ENCODE measurements at regions of chr9 and their contacts with region 1.

Region 1: DNA sequence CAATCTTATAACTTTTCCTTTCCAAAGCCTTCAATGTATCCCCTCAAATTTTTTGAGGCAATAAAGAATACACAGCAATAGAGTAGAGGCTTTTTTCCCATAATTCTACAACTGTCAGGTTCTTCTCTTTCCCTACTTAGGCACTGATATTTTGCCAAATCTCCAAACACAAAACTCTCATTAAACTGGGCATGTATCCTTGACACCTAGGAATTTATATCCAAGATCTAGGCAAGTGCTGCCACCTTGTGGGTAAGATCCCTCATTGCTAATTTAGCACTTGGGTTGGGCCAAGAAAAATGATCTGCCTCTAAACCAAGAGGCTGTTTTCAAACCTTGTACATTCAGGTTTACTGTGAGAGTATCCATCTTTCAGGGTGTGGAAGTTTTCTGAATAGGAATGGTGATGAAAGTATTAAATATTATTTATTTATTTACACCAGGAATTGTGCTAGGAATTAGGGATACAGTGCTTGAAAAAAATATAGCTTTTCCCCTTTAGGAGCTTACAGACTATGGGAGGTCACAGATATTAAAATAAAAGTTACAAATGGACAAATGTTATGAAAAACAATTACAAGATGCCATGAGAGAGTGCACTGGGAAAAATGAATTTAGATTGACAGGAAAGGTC is 17.6 kb downstream of the TSTD2 start:
- DNase-seq: peak; percentile 71 to 78 (median 76)
- ATAC-seq: peak; percentile 82
- H3K4me3 ChIP-seq: no peak overlapping the region
- H3K27ac ChIP-seq: no peak overlapping the region
- H3K4me1 ChIP-seq: peaks cover 5% of the 10 kb centered on the region
- H3K27me3 ChIP-seq: no peaks in the 10 kb centered on the region
- CTCF ChIP-seq: peak; percentile 50 to 89 (median 85)
- POLR2A ChIP-seq: no peak

Region 2: GRCh38 chr9:97468658-97469448 is 146.7 kb before region 1 on chr9:
- intact Hi-C with region 1: loop called (anchors 5 kb)
- DNase-seq: peak; percentile 83 to 88 (median 87)
- ATAC-seq: peak; percentile 99
- H3K4me3 ChIP-seq: no peak overlapping the region
- H3K27ac ChIP-seq: no peak overlapping the region
- H3K4me1 ChIP-seq: peaks cover 7% of the 10 kb centered on the region
- H3K27me3 ChIP-seq: no peaks in the 10 kb centered on the region
- CTCF ChIP-seq: peak; percentile 65 to 96 (median 93)
- POLR2A ChIP-seq: no peak